ENCODE measurements at regions of chr9 and their contacts with region 1.

Region 1: DNA sequence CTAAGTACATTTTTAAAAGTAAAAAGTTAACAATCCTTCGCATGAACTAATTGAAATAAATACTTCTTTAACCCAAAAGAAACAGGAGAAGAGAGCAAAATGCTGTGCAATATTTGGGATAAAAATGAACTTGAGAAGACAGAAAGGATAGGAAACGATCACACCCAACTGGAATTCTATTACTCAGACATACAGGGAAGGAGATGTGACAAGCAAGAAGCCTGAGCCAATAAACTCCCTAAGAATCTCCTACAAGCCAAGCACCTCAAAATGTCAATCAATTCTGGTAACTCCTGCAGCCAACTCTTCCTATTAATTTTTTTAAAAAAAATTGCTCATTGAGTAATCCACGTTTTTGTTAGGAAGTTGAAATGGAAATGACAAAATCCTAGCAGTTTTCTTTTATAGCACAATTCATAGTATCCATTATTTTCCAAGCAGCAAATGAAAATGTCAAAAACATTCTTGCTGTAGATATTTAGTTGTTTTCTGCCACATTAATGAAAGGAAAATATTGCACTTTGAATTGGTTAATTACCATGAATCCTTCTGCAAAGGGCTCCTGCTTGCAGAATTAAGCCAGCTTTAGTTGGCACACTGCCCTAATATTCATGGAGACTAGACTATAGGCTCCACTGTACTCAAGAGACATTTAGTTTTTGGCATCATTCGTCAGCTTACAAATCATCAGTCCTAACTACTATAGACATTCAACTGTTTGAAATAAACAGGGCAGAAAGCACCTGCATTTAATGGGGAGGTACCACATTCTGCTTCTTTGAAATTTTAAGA is 89.0 kb downstream of the RFX3 start:
- DNase-seq: no peak
- ATAC-seq: no peak

Region 2: DNA sequence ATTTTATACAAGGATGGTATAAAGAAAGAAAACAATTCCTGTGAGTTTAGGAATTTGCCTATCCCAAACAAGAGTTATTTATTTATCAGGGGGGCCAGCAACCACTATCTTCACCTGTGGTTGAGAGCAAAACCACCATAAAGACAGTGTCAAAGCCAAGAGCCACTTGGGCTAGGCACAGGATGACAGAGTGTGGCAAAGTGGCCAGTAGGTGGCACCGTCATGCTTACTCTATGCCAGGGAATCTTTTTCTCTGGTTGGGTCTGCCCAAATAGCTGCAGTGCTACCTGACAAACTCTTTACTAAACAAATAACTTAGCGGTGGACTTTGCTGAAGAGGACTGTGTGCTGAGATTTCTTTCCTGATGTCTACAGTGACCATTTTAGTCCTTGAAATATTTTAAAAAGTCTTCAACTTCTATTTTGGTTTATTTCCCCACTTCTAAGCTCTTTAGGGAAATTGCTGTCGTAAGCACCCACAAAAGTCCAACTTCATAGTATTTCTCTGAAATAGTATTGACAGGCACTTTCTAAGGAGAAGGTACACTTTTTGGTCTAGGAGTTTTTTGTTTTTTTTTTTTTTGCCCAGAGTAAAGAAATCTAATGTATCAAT is 196.1 kb before region 1 on chr9:
- intact Hi-C with region 1: loop called (anchors 10 kb)
- DNase-seq: peak; percentile 67
- ATAC-seq: peak; percentile 82

Measured in left ventricle myocardium superior (tissue), 1 donor.